GM12878 (cell line): ENCODE measurements at regions of chr7 and their contacts with region 1.

Region 1: GRCh38 chr7:44921607-44922359 is 36.5 kb upstream of the PURB start:
- DNase-seq: peak; percentile 15
- ATAC-seq: peak; percentile 100
- H3K4me3 ChIP-seq: no peak overlapping the region
- H3K27ac ChIP-seq: no peak overlapping the region
- H3K4me1 ChIP-seq: no peaks in the 10 kb centered on the region
- H3K27me3 ChIP-seq: no peaks in the 10 kb centered on the region
- CTCF ChIP-seq: peak; percentile 86 to 92 (median 88)
- EP300 ChIP-seq: no peak
- POLR2A ChIP-seq: no peak
- RAD21 ChIP-seq: peak; percentile 96

Region 2: DNA sequence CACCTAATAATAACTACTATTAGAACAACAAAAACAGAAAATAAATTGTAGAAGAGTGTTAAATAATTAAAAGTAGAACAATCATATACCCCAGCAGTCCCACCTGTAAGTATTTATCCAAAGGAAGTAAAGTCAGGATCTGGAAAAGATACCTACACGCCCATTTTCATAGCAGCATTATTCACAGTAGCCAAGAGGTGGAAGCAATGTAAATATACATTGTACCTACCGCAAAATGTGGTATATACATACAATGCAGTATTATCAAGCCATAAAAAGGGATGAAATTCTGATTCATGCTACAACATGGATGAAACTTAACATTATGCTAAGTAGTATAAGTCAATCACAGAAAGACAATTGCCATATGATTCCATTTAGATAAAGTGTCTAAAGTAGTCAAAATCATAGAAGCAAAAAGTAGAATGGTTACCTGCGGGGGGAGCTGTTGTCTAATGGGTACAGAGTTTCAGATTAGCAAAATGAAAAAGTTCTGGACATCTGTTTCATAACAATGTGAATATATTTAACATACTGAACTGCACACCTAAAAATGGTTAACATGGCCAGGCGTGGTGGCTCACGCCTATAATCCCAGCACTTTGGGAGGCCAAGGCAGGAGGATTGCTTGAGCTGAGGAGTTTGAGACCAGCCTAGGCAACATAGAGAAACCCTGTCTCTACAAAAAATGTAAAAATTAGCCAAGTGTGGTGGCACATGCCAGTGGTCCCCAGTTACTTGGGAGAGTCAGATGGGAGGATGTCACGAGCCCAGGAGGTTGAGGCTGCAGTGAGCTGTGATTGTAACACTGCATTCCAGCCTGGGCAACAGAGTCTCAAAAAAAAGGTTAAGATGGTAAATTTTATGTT is 333.7 kb before region 1 on chr7:
- CTCF ChIA-PET with region 1: interaction called, 5 read pairs
- POLR2A ChIA-PET with region 1: no interaction called
- RAD21 ChIA-PET with region 1: no interaction called
- SMC1A ChIA-PET with region 1: no interaction called
- in situ Hi-C with region 1: loop called (anchors 5 kb)
- intact Hi-C with region 1: loop called (anchors 1 kb)
- DNase-seq: peak; percentile 53
- ATAC-seq: peak; percentile 95
- H3K4me3 ChIP-seq: no peak overlapping the region
- H3K27ac ChIP-seq: no peak overlapping the region
- H3K4me1 ChIP-seq: peaks cover 5% of the 10 kb centered on the region
- H3K27me3 ChIP-seq: no peaks in the 10 kb centered on the region
- CTCF ChIP-seq: peak; percentile 62 to 77 (median 64); a peak in 5 of 6 replicates
- EP300 ChIP-seq: no peak
- POLR2A ChIP-seq: no peak
- RAD21 ChIP-seq: peak; percentile 94

Region 3: DNA sequence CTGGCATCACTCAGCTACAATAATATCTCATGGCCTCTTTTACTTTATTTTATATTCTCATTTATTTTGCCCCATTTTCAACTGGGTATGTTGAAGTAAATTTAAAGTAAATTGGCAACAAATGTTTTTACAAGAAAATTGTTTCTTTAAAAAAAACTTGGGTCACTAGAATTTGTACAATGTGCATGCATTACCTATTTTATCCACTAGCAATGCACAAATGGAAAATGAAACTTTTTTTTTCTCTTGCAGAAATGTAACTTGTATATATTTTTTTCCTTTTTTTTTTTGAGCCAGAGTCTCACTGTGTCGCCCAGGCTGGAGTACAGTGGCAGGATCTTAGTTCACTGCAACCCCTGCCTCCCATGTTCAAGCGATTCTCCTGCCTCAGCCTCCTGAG is 63.6 kb before region 1 on chr7:
- CTCF ChIA-PET with region 1: interaction called, 117 read pairs
- POLR2A ChIA-PET with region 1: interaction called, 3 read pairs
- RAD21 ChIA-PET with region 1: interaction called, 48 read pairs
- SMC1A ChIA-PET with region 1: interaction called, 138 read pairs
- in situ Hi-C with region 1: loop called (anchors 5 kb)
- intact Hi-C with region 1: loop called (anchors 1 kb)
- DNase-seq: no peak
- ATAC-seq: no peak; the same call in 2 of the 3 replicates
- H3K4me3 ChIP-seq: no peak overlapping the region
- H3K27ac ChIP-seq: no peak overlapping the region
- H3K4me1 ChIP-seq: no peaks in the 10 kb centered on the region
- H3K27me3 ChIP-seq: no peaks in the 10 kb centered on the region
- CTCF ChIP-seq: 0 out of 6 replicates have a peak, but pooled peaks of 1 of the 3 experiments have one; percentile 8
- EP300 ChIP-seq: no peak
- POLR2A ChIP-seq: no peak
- RAD21 ChIP-seq: no peak

Region 4: DNA sequence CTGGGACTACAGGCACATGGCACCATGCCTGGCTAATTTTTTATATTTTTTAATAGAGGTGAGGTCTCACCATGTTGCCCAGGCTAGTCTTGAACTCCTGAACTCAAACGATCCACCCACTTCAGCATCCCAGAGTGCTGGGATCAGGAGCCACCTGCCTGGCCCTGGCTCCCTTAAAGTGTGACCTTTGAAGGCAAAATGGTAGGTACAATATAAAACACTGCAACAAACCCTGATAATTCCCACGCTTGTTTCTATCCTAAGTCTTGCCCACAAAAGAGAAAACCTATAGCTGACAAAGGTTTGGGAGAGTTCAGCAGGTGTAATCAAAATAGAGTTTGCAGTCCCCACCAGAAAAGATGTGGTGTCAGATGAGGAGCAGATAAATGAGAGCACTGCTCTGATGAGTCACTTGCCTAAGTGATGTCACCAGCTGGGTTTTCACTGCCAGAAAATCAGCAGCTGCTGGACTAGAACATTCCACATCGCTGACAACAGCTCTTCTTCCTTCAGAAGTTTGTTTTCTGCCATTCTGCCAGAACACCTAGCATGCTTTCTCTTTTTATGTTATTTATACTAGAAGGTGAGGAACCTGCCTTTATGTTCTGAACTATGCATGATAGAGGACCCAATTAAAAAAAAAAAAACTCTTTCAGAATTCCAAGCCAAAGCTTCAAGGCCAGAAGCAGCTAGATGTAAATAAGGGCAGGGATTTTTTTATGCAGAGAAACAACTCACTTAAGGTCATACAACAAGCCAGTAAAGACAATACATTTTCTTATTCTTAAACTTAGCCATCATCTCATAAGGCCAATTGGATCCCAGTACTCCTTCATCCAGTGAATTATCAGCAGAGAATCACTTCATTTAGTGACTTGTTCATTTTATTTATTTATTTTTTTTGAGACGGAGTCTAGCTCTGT is 54.4 kb before region 1 on chr7:
- CTCF ChIA-PET with region 1: interaction called, 11 read pairs
- POLR2A ChIA-PET with region 1: no interaction called
- RAD21 ChIA-PET with region 1: interaction called, 3 read pairs
- SMC1A ChIA-PET with region 1: interaction called, 138 read pairs
- in situ Hi-C with region 1: no loop called
- intact Hi-C with region 1: no loop called
- DNase-seq: no peak
- ATAC-seq: 0 out of 3 replicates have a peak, but pooled peaks have one; percentile 18
- H3K4me3 ChIP-seq: no peak overlapping the region
- H3K27ac ChIP-seq: no peak overlapping the region
- H3K4me1 ChIP-seq: no peaks in the 10 kb centered on the region
- H3K27me3 ChIP-seq: no peaks in the 10 kb centered on the region; a peak in 1 of 4 replicates
- CTCF ChIP-seq: no peak
- EP300 ChIP-seq: no peak
- POLR2A ChIP-seq: no peak
- RAD21 ChIP-seq: no peak

Region 5: GRCh38 chr7:44885394-44886317 is 36.1 kb before region 1 on chr7 and contains the start of gene PURB:
- CTCF ChIA-PET with region 1: interaction called, 17 read pairs
- POLR2A ChIA-PET with region 1: no interaction called
- RAD21 ChIA-PET with region 1: interaction called, 4 read pairs
- SMC1A ChIA-PET with region 1: interaction called, 11 read pairs
- in situ Hi-C with region 1: no loop called
- intact Hi-C with region 1: no loop called
- DNase-seq: peak; percentile 79
- ATAC-seq: peak; percentile 88
- H3K4me3 ChIP-seq: peak within 1 kb of the TSS; percentile 99
- H3K27ac ChIP-seq: peak within 1 kb of the TSS; percentile 99
- H3K4me1 ChIP-seq: 0 out of 2 replicates have a peak, but pooled peaks cover 3% of the 10 kb centered on the region
- H3K27me3 ChIP-seq: no peaks in the 10 kb centered on the region
- CTCF ChIP-seq: no peak; a peak in 1 of 6 replicates
- EP300 ChIP-seq: peak; percentile 62 to 64; a peak in 3 of 4 replicates
- POLR2A ChIP-seq: peak; percentile 91
- RAD21 ChIP-seq: no peak
- polyA plus RNA-seq, gene PURB: 2.5 to 2.8 TPM